Natural killer cell (primary cell): ENCODE measurements at regions of chr2 and their contacts with region 1.

Region 1: GRCh38 chr2:234288974-234289455 is 207.9 kb downstream of the ARL4C start:
- DNase-seq: peak; percentile 75 to 90
- ATAC-seq: peak; percentile 1 to 16 (median 12)
- H3K4me3 ChIP-seq: no peak overlapping the region
- H3K4me3 Mint-ChIP-seq: peak overlapping the region; percentile 85
- H3K27ac ChIP-seq: peak overlapping the region; percentile 99
- H3K27ac Mint-ChIP-seq: peak overlapping the region; percentile 97 to 98
- H3K4me1 ChIP-seq: peaks cover 63% of the 10 kb centered on the region
- H3K4me1 Mint-ChIP-seq: peaks cover 63 to 81% of the 10 kb centered on the region in 2 donors
- H3K27me3 ChIP-seq: no peaks in the 10 kb centered on the region
- H3K27me3 Mint-ChIP-seq: no peaks in the 10 kb centered on the region
- CTCF ChIP-seq: peak; percentile 88

Region 2: GRCh38 chr2:233990261-233990798 is 298.7 kb before region 1 on chr2:
- intact Hi-C with region 1: loop called (anchors 1 kb)
- DNase-seq: peak; percentile 65 to 90
- ATAC-seq: peak; percentile 85 to 92 (median 86)
- H3K4me3 ChIP-seq: no peak overlapping the region
- H3K4me3 Mint-ChIP-seq: peak overlapping the region; percentile 45
- H3K27ac ChIP-seq: peak overlapping the region; percentile 66
- H3K27ac Mint-ChIP-seq: peak overlapping the region; percentile 59 to 86
- H3K4me1 ChIP-seq: peaks cover 56% of the 10 kb centered on the region
- H3K4me1 Mint-ChIP-seq: peaks cover 48 to 50% of the 10 kb centered on the region in 2 donors
- H3K27me3 ChIP-seq: no peaks in the 10 kb centered on the region
- H3K27me3 Mint-ChIP-seq: peaks cover 0 to 5% of the 10 kb centered on the region in 2 donors
- CTCF ChIP-seq: no peak

Region 3: DNA sequence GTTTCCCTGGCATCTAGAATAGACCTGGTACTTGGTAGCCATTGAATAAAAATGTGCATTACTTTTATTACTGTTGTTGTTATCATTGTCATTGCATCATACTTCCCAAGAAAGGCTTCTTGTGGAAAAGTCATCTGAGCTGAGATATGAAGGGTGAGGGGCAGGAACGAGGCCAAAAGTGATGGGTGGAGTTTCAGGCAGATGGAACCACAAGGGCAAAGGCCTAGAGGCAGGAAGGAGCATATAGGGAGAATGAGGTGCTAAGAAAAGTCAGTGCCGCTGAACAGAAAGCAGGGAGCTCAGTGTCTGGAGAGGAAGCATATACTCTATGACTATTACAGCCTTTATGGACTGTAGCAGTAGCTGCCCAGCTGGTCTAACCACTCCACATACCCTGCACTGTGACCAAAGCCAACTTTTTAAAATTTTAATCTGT is 19.2 kb before region 1 on chr2:
- intact Hi-C with region 1: loop called (anchors 2 kb)
- DNase-seq: no peak
- ATAC-seq: no peak
- H3K4me3 ChIP-seq: no peak overlapping the region
- H3K4me3 Mint-ChIP-seq: no peak overlapping the region
- H3K27ac ChIP-seq: no peak overlapping the region
- H3K27ac Mint-ChIP-seq: peak overlapping the region in 1 of 2 donors; percentile 17
- H3K4me1 ChIP-seq: peaks cover 31% of the 10 kb centered on the region
- H3K4me1 Mint-ChIP-seq: peaks cover 60 to 64% of the 10 kb centered on the region in 2 donors
- H3K27me3 ChIP-seq: no peaks in the 10 kb centered on the region
- H3K27me3 Mint-ChIP-seq: no peaks in the 10 kb centered on the region
- CTCF ChIP-seq: no peak

Region 4: GRCh38 chr2:234324116-234324515 is 35.1 kb after region 1 on chr2:
- intact Hi-C with region 1: no loop called
- DNase-seq: no peak
- ATAC-seq: no peak
- H3K4me3 ChIP-seq: no peak overlapping the region
- H3K4me3 Mint-ChIP-seq: no peak overlapping the region
- H3K27ac ChIP-seq: no peak overlapping the region
- H3K27ac Mint-ChIP-seq: peak overlapping the region in 1 of 2 donors; percentile 44
- H3K4me1 ChIP-seq: no peaks in the 10 kb centered on the region
- H3K4me1 Mint-ChIP-seq: peaks cover 20 to 36% of the 10 kb centered on the region in 2 donors
- H3K27me3 ChIP-seq: no peaks in the 10 kb centered on the region
- H3K27me3 Mint-ChIP-seq: no peaks in the 10 kb centered on the region
- CTCF ChIP-seq: no peak

Region 5: GRCh38 chr2:234335661-234336228 is 46.7 kb after region 1 on chr2:
- intact Hi-C with region 1: loop called (anchors 2 kb)
- DNase-seq: peak; percentile 56 to 79
- ATAC-seq: peak; percentile 85 to 92 (median 90)
- H3K4me3 ChIP-seq: no peak overlapping the region
- H3K4me3 Mint-ChIP-seq: peak overlapping the region; percentile 32
- H3K27ac ChIP-seq: peak overlapping the region; percentile 28
- H3K27ac Mint-ChIP-seq: peak overlapping the region; percentile 76 to 88
- H3K4me1 ChIP-seq: peaks cover 10% of the 10 kb centered on the region
- H3K4me1 Mint-ChIP-seq: peaks cover 20 to 41% of the 10 kb centered on the region in 2 donors
- H3K27me3 ChIP-seq: no peaks in the 10 kb centered on the region
- H3K27me3 Mint-ChIP-seq: peaks cover 0 to 5% of the 10 kb centered on the region in 2 donors
- CTCF ChIP-seq: no peak

Region 6: DNA sequence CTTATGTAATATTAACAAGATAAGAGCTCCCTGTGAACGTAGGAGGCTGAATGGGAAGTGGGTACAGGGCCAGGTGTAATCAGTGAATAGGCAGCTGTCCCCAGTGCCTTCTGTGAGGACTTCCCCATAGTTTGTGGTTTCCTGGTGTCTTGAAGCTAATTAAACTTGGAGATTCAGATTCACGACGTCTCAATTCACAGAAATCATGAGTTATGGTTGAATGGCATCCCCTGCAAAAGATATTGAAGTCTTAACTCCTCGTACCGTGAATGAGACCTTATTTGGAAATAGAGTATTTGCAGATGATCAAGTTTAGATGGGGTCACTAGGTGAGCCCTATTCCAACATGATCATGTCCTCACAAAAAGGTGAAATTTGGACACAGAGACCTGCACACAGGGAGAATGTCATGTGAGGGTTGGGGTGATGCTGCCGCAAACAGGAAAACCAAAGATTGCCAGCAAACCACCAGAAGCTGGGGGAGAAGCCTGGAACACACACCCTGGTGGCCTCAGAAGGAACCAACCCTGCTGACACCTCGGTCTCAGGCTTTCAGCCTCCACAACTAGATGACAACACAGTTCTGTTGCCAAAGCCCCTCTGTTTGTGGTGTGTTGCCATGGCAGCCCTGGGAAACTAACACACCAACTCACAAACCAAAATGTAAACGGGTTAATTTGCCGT is 194.7 kb after region 1 on chr2:
- intact Hi-C with region 1: loop called (anchors 1 kb)
- DNase-seq: peak; percentile 86 to 95
- ATAC-seq: peak; percentile 78 to 89 (median 86)
- H3K4me3 ChIP-seq: no peak overlapping the region
- H3K4me3 Mint-ChIP-seq: peak overlapping the region; percentile 80
- H3K27ac ChIP-seq: peak overlapping the region; percentile 96
- H3K27ac Mint-ChIP-seq: peak overlapping the region; percentile 95 to 99
- H3K4me1 ChIP-seq: peaks cover 69% of the 10 kb centered on the region
- H3K4me1 Mint-ChIP-seq: peaks cover 67 to 76% of the 10 kb centered on the region in 2 donors
- H3K27me3 ChIP-seq: no peaks in the 10 kb centered on the region
- H3K27me3 Mint-ChIP-seq: no peaks in the 10 kb centered on the region
- CTCF ChIP-seq: peak; percentile 47